IMR-90 (cell line): ENCODE measurements at regions of chr17 and their contacts with region 1.

Region 1: DNA sequence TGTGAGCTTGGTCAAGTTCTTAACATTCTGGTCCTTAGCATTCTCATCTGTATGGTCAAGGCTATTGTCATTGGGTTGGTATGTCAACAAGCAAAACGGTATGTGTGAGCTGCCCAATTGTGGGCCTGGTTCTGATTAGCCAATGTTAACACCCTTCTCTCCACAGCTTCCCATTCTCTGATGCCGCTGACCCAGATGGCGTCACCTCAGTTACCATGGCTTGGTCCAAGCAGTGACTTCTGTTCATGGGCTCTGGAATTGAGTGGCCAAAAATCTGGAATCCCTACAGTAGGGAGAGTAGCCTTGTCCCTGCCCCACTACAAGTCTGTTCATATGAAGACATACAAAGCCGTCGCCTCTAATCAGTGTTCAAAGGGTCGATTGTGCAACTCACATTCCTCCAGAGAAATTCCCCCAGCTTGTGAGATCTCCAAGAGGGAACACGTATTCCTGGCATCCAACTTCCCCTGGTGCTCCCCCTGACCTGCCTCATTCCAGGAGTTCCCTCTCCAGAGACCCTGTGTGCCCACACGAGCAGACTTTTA is 15.8 kb downstream of the TMEM98 start:
- DNase-seq: peak; percentile 76
- ATAC-seq: peak; percentile 80
- H3K4me3 ChIP-seq: no peak overlapping the region
- H3K27ac ChIP-seq: peak overlapping the region; percentile 68; the same call in 1 of the 2 replicates
- H3K4me1 ChIP-seq: peaks cover 14% of the 10 kb centered on the region
- H3K27me3 ChIP-seq: no peaks in the 10 kb centered on the region
- CTCF ChIP-seq: no peak
- POLR2A ChIP-seq: no peak
- RAD21 ChIP-seq: no peak

Region 2: DNA sequence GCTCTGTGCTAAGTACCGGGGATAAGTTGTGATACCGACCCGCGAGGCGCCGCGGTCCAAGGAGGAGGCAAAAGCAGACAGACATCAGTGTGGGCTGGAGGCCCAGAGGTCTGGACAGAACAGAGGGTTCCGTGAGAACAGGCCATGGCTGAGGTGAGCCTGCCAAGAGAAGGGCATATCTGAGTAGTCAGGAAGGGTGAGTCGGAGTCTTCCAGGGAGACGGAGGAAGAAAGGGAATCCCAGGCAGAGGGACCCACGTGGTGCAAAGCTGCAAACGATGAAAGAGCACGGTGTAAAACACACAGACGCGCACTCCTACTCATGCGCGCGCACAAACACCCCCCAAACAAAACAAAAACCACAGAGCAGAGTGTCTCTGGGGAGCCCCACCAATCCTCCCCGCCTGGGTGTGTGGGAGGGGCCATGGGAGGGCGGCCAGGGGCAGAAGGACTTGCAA is 659.9 kb before region 1 on chr17:
- CTCF ChIA-PET with region 1: no interaction called
- POLR2A ChIA-PET with region 1: no interaction called
- dilution Hi-C with region 1: no loop called
- in situ Hi-C with region 1: no loop called
- intact Hi-C with region 1: no loop called
- DNase-seq: peak; percentile 72
- ATAC-seq: peak; percentile 64
- H3K4me3 ChIP-seq: no peak overlapping the region
- H3K27ac ChIP-seq: no peak overlapping the region
- H3K4me1 ChIP-seq: no peaks in the 10 kb centered on the region
- H3K27me3 ChIP-seq: peaks cover 44% of the 10 kb centered on the region
- CTCF ChIP-seq: no peak
- POLR2A ChIP-seq: no peak
- RAD21 ChIP-seq: no peak

Region 3: DNA sequence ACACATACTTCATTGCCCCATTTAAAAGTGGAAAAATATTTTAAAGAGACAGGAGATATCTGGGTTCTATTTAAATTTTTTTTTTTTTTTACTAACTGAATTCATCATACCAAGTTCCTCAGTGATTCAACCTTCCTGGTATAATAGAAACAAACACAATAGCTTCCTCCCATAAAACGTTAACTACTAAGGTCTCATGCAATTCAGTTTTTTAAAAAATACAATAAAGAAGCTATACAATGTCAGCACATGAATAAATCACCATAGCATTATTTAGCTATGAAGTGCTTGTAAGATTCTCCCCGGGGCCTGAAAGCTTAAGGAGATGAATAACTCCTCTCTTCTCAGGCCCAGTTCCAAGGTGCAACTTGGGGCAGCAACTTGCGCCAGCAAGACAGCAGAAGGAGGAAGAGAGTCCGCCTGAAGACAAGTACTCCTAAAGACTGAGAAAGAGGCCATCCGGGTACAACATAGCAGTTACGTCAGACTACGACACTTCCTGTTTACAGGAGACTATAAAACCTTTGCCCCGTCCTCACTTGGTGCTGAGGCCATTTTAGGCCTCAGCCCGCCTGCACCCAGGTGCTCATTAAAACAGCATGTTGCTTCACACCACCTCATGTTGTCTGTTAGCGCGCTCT is 148.3 kb before region 1 on chr17:
- CTCF ChIA-PET with region 1: no interaction called
- POLR2A ChIA-PET with region 1: no interaction called
- dilution Hi-C with region 1: no loop called
- in situ Hi-C with region 1: no loop called
- intact Hi-C with region 1: no loop called
- DNase-seq: no peak
- ATAC-seq: no peak
- H3K4me3 ChIP-seq: no peak overlapping the region
- H3K27ac ChIP-seq: no peak overlapping the region
- H3K4me1 ChIP-seq: no peaks in the 10 kb centered on the region
- H3K27me3 ChIP-seq: no peaks in the 10 kb centered on the region
- CTCF ChIP-seq: no peak
- POLR2A ChIP-seq: no peak
- RAD21 ChIP-seq: no peak

Region 4: DNA sequence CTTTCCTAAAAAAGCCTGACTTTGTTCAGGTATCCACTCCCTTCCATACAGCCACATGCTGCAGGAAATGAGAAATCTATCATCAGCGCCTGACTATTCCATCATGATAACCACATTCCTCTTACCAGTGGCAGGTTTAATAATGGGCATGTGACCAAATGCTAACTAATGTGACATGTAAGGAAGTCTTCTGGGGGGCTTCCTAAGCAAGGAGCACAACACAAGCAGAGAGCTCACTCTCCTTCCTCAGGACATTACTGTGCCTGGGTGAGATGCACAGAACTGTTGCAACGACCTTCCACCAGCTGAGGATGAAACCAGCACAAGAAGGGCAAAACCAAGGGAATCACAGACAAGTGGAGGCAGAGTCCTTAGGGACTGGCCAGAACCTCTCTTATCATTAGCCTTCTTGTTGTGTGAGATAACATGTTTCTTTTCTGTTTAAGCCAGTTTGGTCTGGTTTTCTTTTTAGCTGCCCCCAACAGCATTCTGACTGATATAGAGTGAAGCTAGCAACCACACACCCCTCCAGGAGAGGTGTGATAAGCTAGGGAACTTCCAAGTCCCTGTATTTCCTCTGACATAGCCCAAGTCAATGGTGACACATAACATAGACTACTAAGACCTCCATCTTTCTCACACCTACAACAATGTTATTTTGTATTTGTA is 83.7 kb before region 1 on chr17:
- CTCF ChIA-PET with region 1: no interaction called
- POLR2A ChIA-PET with region 1: no interaction called
- dilution Hi-C with region 1: no loop called
- in situ Hi-C with region 1: no loop called
- intact Hi-C with region 1: no loop called
- DNase-seq: no peak
- ATAC-seq: no peak
- H3K4me3 ChIP-seq: no peak overlapping the region
- H3K27ac ChIP-seq: no peak overlapping the region
- H3K4me1 ChIP-seq: no peaks in the 10 kb centered on the region
- H3K27me3 ChIP-seq: no peaks in the 10 kb centered on the region; the same call in 1 of the 2 replicates
- CTCF ChIP-seq: no peak
- POLR2A ChIP-seq: no peak
- RAD21 ChIP-seq: no peak

Region 5: GRCh38 chr17:32927724-32928585 is 15.8 kb before region 1 on chr17 and contains the start of gene TMEM98:
- CTCF ChIA-PET with region 1: no interaction called
- POLR2A ChIA-PET with region 1: no interaction called
- dilution Hi-C with region 1: no loop called
- in situ Hi-C with region 1: no loop called
- intact Hi-C with region 1: loop called (anchors 1 kb)
- DNase-seq: peak; percentile 12
- ATAC-seq: peak; percentile 81
- H3K4me3 ChIP-seq: peak within 1 kb of the TSS; percentile 79
- H3K27ac ChIP-seq: peak within 1 kb of the TSS; percentile 94
- H3K4me1 ChIP-seq: peaks cover 16% of the 10 kb centered on the region
- H3K27me3 ChIP-seq: no peaks in the 10 kb centered on the region
- CTCF ChIP-seq: no peak
- POLR2A ChIP-seq: no peak
- RAD21 ChIP-seq: no peak
- total RNA-seq, gene TMEM98: 129 and 173 TPM in 2 replicates